ENCODE measurements at regions of chr5 and their contacts with region 1.

Region 1: DNA sequence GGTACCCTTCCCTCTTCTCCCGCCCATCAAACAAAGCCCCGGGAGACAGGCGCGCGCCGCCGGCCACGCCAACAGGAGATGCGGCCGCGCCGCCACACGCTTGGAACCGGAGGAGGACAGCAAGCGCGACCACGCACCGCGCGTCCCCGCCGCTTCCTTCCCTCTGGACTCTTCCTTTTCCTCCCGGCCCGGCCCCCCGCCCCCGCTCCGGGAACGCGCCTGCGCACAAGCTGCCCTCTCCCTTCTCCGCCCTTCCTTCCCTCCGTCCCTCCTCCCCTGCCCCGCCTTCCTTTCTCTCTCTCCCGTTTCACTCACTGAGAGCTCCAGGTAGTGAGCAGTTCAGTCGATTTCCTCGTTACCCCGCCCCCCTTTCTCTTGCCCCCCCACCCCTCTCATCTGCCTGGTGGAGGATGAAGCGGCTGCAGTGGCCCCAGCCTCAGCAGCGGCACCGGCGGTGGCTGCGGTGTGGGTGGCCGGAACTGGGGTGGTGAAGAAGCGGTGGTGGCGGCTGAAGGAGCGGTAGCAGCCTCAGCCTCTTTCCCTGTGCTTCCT is at the start of gene RASA1:
- DNase-seq: peak in 1 of 2 donors; percentile 87
- ATAC-seq: peak; percentile 62 to 71 (median 65)
- H3K4me3 ChIP-seq: peak within 1 kb of the TSS; percentile 89
- H3K4me3 Mint-ChIP-seq: peak within 1 kb of the TSS; percentile 99
- H3K27ac ChIP-seq: peak within 1 kb of the TSS; percentile 72
- H3K27ac Mint-ChIP-seq: peak within 1 kb of the TSS; percentile 93 to 98
- H3K4me1 ChIP-seq: peaks cover 21% of the 10 kb centered on the region
- H3K4me1 Mint-ChIP-seq: peaks cover 23 to 30% of the 10 kb centered on the region in 2 donors
- H3K27me3 ChIP-seq: no peaks in the 10 kb centered on the region
- H3K27me3 Mint-ChIP-seq: no peaks in the 10 kb centered on the region
- CTCF ChIP-seq: no peak
- total RNA-seq, gene RASA1: 20.3 to 26.5 (median 21.2) TPM

Region 2: GRCh38 chr5:85488295-85488694 is 1779.4 kb before region 1 on chr5:
- intact Hi-C with region 1: no loop called
- DNase-seq: no peak
- ATAC-seq: no peak
- H3K4me3 ChIP-seq: no peak overlapping the region
- H3K4me3 Mint-ChIP-seq: no peak overlapping the region
- H3K27ac ChIP-seq: no peak overlapping the region
- H3K27ac Mint-ChIP-seq: no peak overlapping the region
- H3K4me1 ChIP-seq: no peaks in the 10 kb centered on the region
- H3K4me1 Mint-ChIP-seq: no peaks in the 10 kb centered on the region
- H3K27me3 ChIP-seq: no peaks in the 10 kb centered on the region
- H3K27me3 Mint-ChIP-seq: no peaks in the 10 kb centered on the region
- CTCF ChIP-seq: no peak

Region 3: GRCh38 chr5:87069974-87070624 is 197.6 kb before region 1 on chr5:
- intact Hi-C with region 1: loop called (anchors 2 kb)
- DNase-seq: peak in 1 of 2 donors; percentile 40
- ATAC-seq: peak in 2 of 3 donors; percentile 42 to 58
- H3K4me3 ChIP-seq: no peak overlapping the region
- H3K4me3 Mint-ChIP-seq: no peak overlapping the region
- H3K27ac ChIP-seq: no peak overlapping the region
- H3K27ac Mint-ChIP-seq: peak overlapping the region in 1 of 2 donors; percentile 56
- H3K4me1 ChIP-seq: peaks cover 21% of the 10 kb centered on the region
- H3K4me1 Mint-ChIP-seq: peaks cover 17 to 27% of the 10 kb centered on the region in 2 donors
- H3K27me3 ChIP-seq: no peaks in the 10 kb centered on the region
- H3K27me3 Mint-ChIP-seq: no peaks in the 10 kb centered on the region
- CTCF ChIP-seq: peak; percentile 41

Region 4: GRCh38 chr5:87393331-87393730 is 125.7 kb after region 1 on chr5:
- intact Hi-C with region 1: loop called (anchors 5 kb)
- DNase-seq: no peak
- ATAC-seq: no peak
- H3K4me3 ChIP-seq: no peak overlapping the region
- H3K4me3 Mint-ChIP-seq: no peak overlapping the region
- H3K27ac ChIP-seq: no peak overlapping the region
- H3K27ac Mint-ChIP-seq: peak overlapping the region; percentile 42 to 93
- H3K4me1 ChIP-seq: peaks cover 6% of the 10 kb centered on the region
- H3K4me1 Mint-ChIP-seq: peaks cover 24 to 39% of the 10 kb centered on the region in 2 donors
- H3K27me3 ChIP-seq: no peaks in the 10 kb centered on the region
- H3K27me3 Mint-ChIP-seq: no peaks in the 10 kb centered on the region
- CTCF ChIP-seq: no peak

Region 5: DNA sequence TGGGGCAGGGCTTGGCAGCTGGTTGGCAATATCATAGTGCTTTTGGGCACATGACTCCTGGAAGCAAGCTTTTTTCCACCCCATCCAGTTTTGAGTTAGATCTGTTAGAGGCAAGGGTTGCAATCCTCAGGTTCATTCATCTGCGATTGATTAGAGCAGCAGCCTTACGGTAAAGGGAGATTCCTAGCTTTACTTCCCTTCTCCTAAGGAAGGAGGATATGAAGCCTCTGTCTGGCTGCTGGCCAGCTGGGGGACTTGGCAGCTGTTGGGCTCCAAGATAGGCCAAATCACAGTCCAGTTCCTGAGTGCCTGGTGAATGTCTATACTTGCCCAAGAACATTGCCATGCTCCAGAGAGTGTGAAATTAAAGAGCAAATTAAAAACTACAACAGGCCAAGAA is 258.5 kb after region 1 on chr5:
- intact Hi-C with region 1: no loop called
- DNase-seq: no peak
- ATAC-seq: no peak
- H3K4me3 ChIP-seq: no peak overlapping the region
- H3K4me3 Mint-ChIP-seq: no peak overlapping the region
- H3K27ac ChIP-seq: no peak overlapping the region
- H3K27ac Mint-ChIP-seq: no peak overlapping the region
- H3K4me1 ChIP-seq: no peaks in the 10 kb centered on the region
- H3K4me1 Mint-ChIP-seq: no peaks in the 10 kb centered on the region
- H3K27me3 ChIP-seq: no peaks in the 10 kb centered on the region
- H3K27me3 Mint-ChIP-seq: no peaks in the 10 kb centered on the region
- CTCF ChIP-seq: no peak